ENCODE measurements at regions of chr15 and their contacts with region 1.

Region 1: GRCh38 chr15:91246998-91247397 is 146.9 kb downstream of the SV2B start:
- DNase-seq: no peak
- H3K4me3 Mint-ChIP-seq: no peak overlapping the region
- H3K27ac Mint-ChIP-seq: no peak overlapping the region
- H3K4me1 Mint-ChIP-seq: no peaks in the 10 kb centered on the region
- H3K27me3 Mint-ChIP-seq: peaks cover 15% of the 10 kb centered on the region

Region 2: DNA sequence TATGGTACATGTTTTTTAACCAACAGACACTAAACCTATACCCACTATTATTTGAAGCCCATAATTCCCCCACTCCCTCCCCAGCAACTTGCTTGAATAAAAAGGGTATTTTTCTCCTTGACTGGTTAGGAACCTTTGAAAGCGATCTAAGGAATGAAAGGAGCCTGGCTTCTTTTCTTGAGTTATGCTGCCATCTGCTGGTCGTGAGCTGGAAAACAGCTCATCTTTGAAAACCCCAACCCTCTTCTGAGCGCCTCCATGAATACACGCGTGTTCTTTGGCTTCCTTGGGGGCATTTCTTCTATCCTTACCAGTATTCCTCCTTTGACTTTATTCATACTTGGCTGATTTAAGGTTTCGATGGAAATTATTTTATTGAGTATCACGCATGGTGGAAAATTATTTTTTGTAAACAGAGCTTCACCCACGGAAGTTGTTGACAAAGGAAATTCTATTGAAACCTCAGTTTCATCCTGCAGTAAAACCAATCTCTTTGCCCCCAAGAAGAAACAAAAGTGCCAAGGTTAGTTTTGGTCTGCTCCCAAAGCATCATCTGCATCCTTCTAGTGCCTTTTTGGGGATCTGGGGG is 24.7 kb after region 1 on chr15:
- intact Hi-C with region 1: loop called (anchors 2 kb)
- DNase-seq: peak; percentile 38
- H3K4me3 Mint-ChIP-seq: peak overlapping the region; percentile 38
- H3K27ac Mint-ChIP-seq: no peak overlapping the region
- H3K4me1 Mint-ChIP-seq: peaks cover 9% of the 10 kb centered on the region
- H3K27me3 Mint-ChIP-seq: peaks cover 33% of the 10 kb centered on the region

Region 3: GRCh38 chr15:91522663-91523332 is 275.8 kb after region 1 on chr15:
- intact Hi-C with region 1: no loop called
- DNase-seq: no peak
- H3K4me3 Mint-ChIP-seq: no peak overlapping the region
- H3K27ac Mint-ChIP-seq: no peak overlapping the region
- H3K4me1 Mint-ChIP-seq: peaks cover 21% of the 10 kb centered on the region
- H3K27me3 Mint-ChIP-seq: peaks cover 12% of the 10 kb centered on the region

Region 4: GRCh38 chr15:91769894-91770293 is 522.9 kb after region 1 on chr15:
- intact Hi-C with region 1: no loop called
- DNase-seq: no peak
- H3K4me3 Mint-ChIP-seq: no peak overlapping the region
- H3K27ac Mint-ChIP-seq: no peak overlapping the region
- H3K4me1 Mint-ChIP-seq: no peaks in the 10 kb centered on the region
- H3K27me3 Mint-ChIP-seq: peaks cover 12% of the 10 kb centered on the region

Measured in activated T-helper 1 cell treated with anti-CD3 and anti-CD28 coated beads, Interleukin-12 subunit alpha, Interleukin-12 subunit beta, Interleukin-2, Interleukin-4 antibody, amounts not matched to agents 30 ng/mL and 10 ng/mL and 1 ng/mL, durations not matched to agents 14 hours and 24 hours and 36 hours (primary cell).